T-cell (primary cell): ENCODE measurements at regions of chr14 and their contacts with region 1.

Region 1: DNA sequence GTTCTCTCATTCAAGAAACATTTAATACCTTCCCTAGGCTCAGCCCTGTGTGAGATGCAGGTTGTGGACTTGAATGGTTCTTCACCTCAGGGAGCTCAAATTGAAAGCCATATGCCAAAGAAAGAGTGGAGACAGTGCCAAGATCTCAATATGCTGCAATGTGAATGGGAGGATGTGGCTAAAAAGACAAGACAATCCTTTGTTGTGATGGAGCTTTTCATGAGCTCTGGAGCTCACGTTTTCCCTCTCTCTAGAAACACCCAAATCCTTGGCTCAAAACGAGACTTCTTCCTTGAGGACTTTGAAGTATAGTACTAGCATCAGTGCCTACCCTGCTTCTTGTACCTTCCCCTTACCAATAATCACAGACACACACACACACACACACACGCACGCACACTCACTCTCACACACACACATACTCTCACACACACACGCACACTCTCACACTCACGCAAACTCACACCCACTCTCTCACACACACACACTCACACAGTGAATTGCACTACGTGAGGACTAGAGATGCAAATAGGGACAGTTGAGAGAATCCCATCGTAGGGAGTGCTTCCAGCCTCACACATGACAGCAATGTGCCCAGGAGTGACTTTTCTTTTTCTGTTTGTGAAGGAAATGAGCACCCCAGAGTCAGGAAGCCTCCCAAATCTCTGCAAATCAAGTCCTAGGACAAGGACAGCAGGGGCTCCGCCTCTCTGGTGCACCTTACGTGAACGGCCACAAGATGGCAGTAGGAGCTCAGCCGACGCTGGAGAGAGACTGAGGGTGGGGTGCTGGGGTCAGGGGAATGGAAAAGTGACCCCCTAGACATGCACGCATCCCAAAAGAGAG is 231.4 kb downstream of the PCNX1 start:
- DNase-seq: peak in 34 of 35 experiments; percentile 13 to 79 (median 48)
- ATAC-seq: peak; percentile 47 to 70 (median 58)
- H3K4me3 ChIP-seq: no peak overlapping the region
- H3K4me3 Mint-ChIP-seq: no peak overlapping the region
- H3K27ac ChIP-seq: no peak overlapping the region
- H3K27ac Mint-ChIP-seq: no peak overlapping the region
- H3K4me1 ChIP-seq: peaks cover 9 to 27% of the 10 kb centered on the region in 2 experiments
- H3K4me1 Mint-ChIP-seq: peaks cover 14 to 27% (median 24%) of the 10 kb centered on the region in 3 donors
- H3K27me3 ChIP-seq: no peaks in the 10 kb centered on the region
- H3K27me3 Mint-ChIP-seq: no peaks in the 10 kb centered on the region

Region 2: GRCh38 chr14:70934502-70935134 is 204.1 kb before region 1 on chr14:
- CTCF ChIA-PET with region 1: no interaction called
- POLR2A ChIA-PET with region 1: no interaction called
- DNase-seq: peak in 1 of 35 experiments; percentile 33
- ATAC-seq: peak; percentile 81 to 86 (median 83)
- H3K4me3 ChIP-seq: no peak overlapping the region
- H3K4me3 Mint-ChIP-seq: peak overlapping the region; percentile 59 to 67 (median 64)
- H3K27ac ChIP-seq: peak overlapping the region; percentile 66
- H3K27ac Mint-ChIP-seq: peak overlapping the region; percentile 89 to 91
- H3K4me1 ChIP-seq: peaks cover 11% of the 10 kb centered on the region in 2 experiments
- H3K4me1 Mint-ChIP-seq: peaks cover 83 to 89% (median 84%) of the 10 kb centered on the region in 3 donors
- H3K27me3 ChIP-seq: no peaks in the 10 kb centered on the region
- H3K27me3 Mint-ChIP-seq: no peaks in the 10 kb centered on the region

Region 3: DNA sequence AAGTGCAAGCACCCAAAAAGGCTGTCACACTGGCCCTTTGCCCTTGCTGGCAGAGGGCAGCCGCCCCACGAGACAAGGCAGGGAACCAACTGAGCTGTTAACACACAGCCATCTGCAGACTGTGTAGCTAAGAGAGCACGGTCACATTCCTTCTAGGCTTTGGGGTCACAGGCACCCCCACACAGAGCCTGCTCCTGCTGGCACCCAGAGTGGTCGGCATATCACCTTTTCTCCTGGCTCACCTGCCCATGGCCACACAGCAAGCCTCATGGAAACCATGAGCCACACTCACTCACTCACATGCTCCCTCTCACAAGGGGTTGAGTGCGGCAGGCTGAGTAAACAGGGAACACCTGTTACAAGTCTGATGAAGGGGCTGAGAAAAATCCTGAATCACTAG is 17.0 kb before region 1 on chr14:
- CTCF ChIA-PET with region 1: no interaction called
- POLR2A ChIA-PET with region 1: no interaction called
- DNase-seq: no peak
- ATAC-seq: peak in 2 of 4 experiments; percentile 23 to 30
- H3K4me3 ChIP-seq: no peak overlapping the region
- H3K4me3 Mint-ChIP-seq: no peak overlapping the region
- H3K27ac ChIP-seq: no peak overlapping the region
- H3K27ac Mint-ChIP-seq: no peak overlapping the region
- H3K4me1 ChIP-seq: no peaks in the 10 kb centered on the region
- H3K4me1 Mint-ChIP-seq: peaks cover 0 to 14% (median 9%) of the 10 kb centered on the region in 3 donors
- H3K27me3 ChIP-seq: no peaks in the 10 kb centered on the region
- H3K27me3 Mint-ChIP-seq: no peaks in the 10 kb centered on the region

Region 4: GRCh38 chr14:71248204-71248603 is 109.5 kb after region 1 on chr14:
- CTCF ChIA-PET with region 1: no interaction called
- POLR2A ChIA-PET with region 1: interaction called in 1 of 2 experiments, 11 read pairs
- DNase-seq: no peak
- ATAC-seq: no peak
- H3K4me3 ChIP-seq: no peak overlapping the region
- H3K4me3 Mint-ChIP-seq: no peak overlapping the region
- H3K27ac ChIP-seq: no peak overlapping the region
- H3K27ac Mint-ChIP-seq: peak overlapping the region in 1 of 2 donors; percentile 0
- H3K4me1 ChIP-seq: peaks cover 11 to 20% of the 10 kb centered on the region in 2 experiments
- H3K4me1 Mint-ChIP-seq: peaks cover 34 to 50% (median 38%) of the 10 kb centered on the region in 3 donors
- H3K27me3 ChIP-seq: no peaks in the 10 kb centered on the region
- H3K27me3 Mint-ChIP-seq: no peaks in the 10 kb centered on the region

Region 5: GRCh38 chr14:71403656-71404055 is 265.0 kb after region 1 on chr14:
- CTCF ChIA-PET with region 1: interaction called, 9 to 11 read pairs
- POLR2A ChIA-PET with region 1: no interaction called
- DNase-seq: peak in 22 of 35 experiments; percentile 5 to 53 (median 19)
- ATAC-seq: peak in 3 of 4 experiments; percentile 47 to 70 (median 59)
- H3K4me3 ChIP-seq: no peak overlapping the region
- H3K4me3 Mint-ChIP-seq: no peak overlapping the region
- H3K27ac ChIP-seq: no peak overlapping the region
- H3K27ac Mint-ChIP-seq: no peak overlapping the region
- H3K4me1 ChIP-seq: peaks cover 14 to 18% of the 10 kb centered on the region in 2 experiments
- H3K4me1 Mint-ChIP-seq: peaks cover 33 to 48% (median 36%) of the 10 kb centered on the region in 3 donors
- H3K27me3 ChIP-seq: no peaks in the 10 kb centered on the region
- H3K27me3 Mint-ChIP-seq: no peaks in the 10 kb centered on the region

Region 6: DNA sequence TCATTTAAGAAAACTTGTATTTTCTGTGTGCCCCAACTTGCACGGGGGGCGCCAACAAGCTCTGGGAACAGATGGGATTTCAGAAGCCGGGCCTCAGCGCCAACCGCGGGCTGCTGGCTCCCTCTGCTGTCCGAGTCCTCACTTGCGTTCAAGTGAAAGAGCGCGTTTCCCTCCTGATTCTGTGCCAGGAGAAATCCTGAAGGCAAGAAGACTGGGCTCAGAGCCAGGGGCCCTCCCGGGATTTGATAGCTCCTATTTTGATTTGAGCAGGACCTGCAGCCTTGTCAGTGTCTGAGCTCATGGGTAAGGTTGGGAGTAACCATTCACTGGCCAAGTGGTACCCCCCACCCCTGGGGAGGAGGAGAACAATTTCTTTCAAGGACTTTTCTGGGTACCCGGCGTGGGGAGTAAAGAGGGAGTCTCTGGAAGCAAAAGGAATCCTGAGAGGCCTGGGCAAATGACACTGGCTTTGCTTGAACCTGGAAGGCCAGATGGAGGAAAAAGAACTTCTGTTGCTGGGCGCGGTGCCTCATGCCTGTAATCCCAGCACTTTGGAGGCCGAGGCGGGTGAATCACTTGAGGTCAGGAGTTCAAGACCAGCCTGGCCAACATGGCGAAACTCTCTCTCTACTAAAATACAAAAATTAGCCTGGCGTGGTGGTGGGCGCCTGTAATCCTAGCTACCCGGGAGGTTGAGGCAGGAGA is 614.6 kb after region 1 on chr14:
- CTCF ChIA-PET with region 1: interaction called, 34 to 35 read pairs
- POLR2A ChIA-PET with region 1: interaction called in 1 of 2 experiments, 3 read pairs
- DNase-seq: peak; percentile 26 to 82 (median 61)
- ATAC-seq: peak in 2 of 4 experiments; percentile 62 to 64
- H3K4me3 ChIP-seq: no peak overlapping the region
- H3K4me3 Mint-ChIP-seq: no peak overlapping the region
- H3K27ac ChIP-seq: no peak overlapping the region
- H3K27ac Mint-ChIP-seq: no peak overlapping the region
- H3K4me1 ChIP-seq: peaks cover 0 to 7% of the 10 kb centered on the region in 2 experiments
- H3K4me1 Mint-ChIP-seq: peaks cover 0 to 2% (median 0%) of the 10 kb centered on the region in 3 donors
- H3K27me3 ChIP-seq: peaks cover 0 to 27% of the 10 kb centered on the region in 2 experiments
- H3K27me3 Mint-ChIP-seq: peaks cover 0 to 3% of the 10 kb centered on the region in 2 donors